Activated CD8-positive, alpha-beta T cell treated with anti-CD3 and anti-CD28 coated beads for 36 hours (primary cell): ENCODE measurements at regions of chr20 and their contacts with region 1.

Region 1: GRCh38 chr20:50546729-50547314 is 36.6 kb downstream of the PTPN1 start:
- DNase-seq: peak; percentile 38
- ATAC-seq: peak; percentile 55
- H3K4me3 Mint-ChIP-seq: peak overlapping the region; percentile 35
- H3K27ac Mint-ChIP-seq: peak overlapping the region; percentile 69
- H3K4me1 Mint-ChIP-seq: peaks cover 51% of the 10 kb centered on the region
- H3K27me3 Mint-ChIP-seq: no peaks in the 10 kb centered on the region
- CTCF ChIP-seq: no peak

Region 2: DNA sequence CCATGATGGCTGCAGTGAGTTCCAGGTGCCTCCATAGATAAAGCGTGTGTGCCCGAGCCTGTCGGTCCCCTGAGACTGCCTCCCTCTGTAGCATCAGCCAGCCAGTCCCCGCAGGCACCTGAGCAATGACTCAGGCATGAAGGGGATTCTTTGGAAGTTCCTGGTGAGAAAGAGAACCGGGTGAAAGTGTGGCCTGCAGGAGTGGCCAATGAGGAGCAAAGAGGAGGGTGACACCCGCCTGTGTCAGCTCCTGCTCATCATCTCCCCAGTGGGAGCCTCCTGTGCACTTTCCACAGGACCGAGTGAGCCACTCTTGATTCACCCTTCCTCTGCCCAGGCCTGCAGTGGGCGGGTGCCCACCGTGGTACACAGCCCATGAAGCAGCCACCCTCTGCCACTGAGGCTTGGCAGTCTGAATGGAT is 107.8 kb before region 1 on chr20:
- CTCF ChIA-PET with region 1: no interaction called
- POLR2A ChIA-PET with region 1: no interaction called
- intact Hi-C with region 1: no loop called
- DNase-seq: no peak
- ATAC-seq: no peak
- H3K4me3 Mint-ChIP-seq: no peak overlapping the region
- H3K27ac Mint-ChIP-seq: no peak overlapping the region
- H3K4me1 Mint-ChIP-seq: peaks cover 14% of the 10 kb centered on the region
- H3K27me3 Mint-ChIP-seq: no peaks in the 10 kb centered on the region
- CTCF ChIP-seq: no peak

Region 3: DNA sequence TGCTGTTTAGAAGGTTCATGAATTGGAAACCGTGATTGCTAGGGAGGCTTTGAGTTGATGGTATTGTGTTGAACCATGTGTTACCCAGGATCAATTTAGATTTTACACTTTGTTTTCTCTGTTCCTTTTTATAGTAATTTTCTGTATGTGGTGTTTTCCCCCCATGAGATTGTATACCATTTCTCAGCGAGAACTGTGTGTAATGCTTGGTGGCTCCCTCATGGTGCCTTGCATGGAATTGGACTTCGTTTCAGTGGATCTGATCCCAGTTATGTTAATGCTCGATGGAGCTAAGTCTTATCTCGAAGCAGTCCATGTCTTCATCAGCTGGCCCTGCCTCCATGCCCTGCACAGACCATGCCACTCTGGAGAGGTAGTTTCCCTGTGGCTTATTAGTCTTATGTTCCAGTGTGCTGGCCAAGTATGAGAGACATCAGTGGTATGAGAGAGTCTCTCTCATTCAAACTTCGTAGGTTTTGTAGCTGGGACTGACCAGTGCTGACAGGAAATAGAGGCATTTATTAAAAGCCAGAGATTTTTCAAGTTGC is 17.9 kb before region 1 on chr20:
- CTCF ChIA-PET with region 1: interaction called, 3 read pairs
- POLR2A ChIA-PET with region 1: interaction called, 13 read pairs
- intact Hi-C with region 1: no loop called
- DNase-seq: no peak
- ATAC-seq: peak; percentile 57
- H3K4me3 Mint-ChIP-seq: no peak overlapping the region
- H3K27ac Mint-ChIP-seq: peak overlapping the region; percentile 56
- H3K4me1 Mint-ChIP-seq: peaks cover 40% of the 10 kb centered on the region
- H3K27me3 Mint-ChIP-seq: no peaks in the 10 kb centered on the region
- CTCF ChIP-seq: no peak

Region 4: GRCh38 chr20:50561379-50562078 is 14.7 kb after region 1 on chr20:
- CTCF ChIA-PET with region 1: no interaction called
- POLR2A ChIA-PET with region 1: interaction called, 16 read pairs
- intact Hi-C with region 1: no loop called
- DNase-seq: peak; percentile 87
- ATAC-seq: peak; percentile 87
- H3K4me3 Mint-ChIP-seq: peak overlapping the region; percentile 50
- H3K27ac Mint-ChIP-seq: peak overlapping the region; percentile 94
- H3K4me1 Mint-ChIP-seq: peaks cover 65% of the 10 kb centered on the region
- H3K27me3 Mint-ChIP-seq: no peaks in the 10 kb centered on the region
- CTCF ChIP-seq: no peak